Dorsolateral prefrontal cortex (tissue), 120 donors: ENCODE measurements at regions of chr2 and their contacts with region 1.

Region 1: GRCh38 chr2:57906152-57906732 is 140.4 kb upstream of the VRK2 start:
- DNase-seq: no peak
- H3K4me3 ChIP-seq: peak overlapping the region in 1 of 59 donors; percentile 6
- H3K27ac ChIP-seq: peak overlapping the region in 54 of 59 donors; percentile 20 to 96 (median 91)
- H3K27me3 ChIP-seq: no peaks in the 10 kb centered on the region
- CTCF ChIP-seq: peak; percentile 64 to 94 (median 83)

Region 2: DNA sequence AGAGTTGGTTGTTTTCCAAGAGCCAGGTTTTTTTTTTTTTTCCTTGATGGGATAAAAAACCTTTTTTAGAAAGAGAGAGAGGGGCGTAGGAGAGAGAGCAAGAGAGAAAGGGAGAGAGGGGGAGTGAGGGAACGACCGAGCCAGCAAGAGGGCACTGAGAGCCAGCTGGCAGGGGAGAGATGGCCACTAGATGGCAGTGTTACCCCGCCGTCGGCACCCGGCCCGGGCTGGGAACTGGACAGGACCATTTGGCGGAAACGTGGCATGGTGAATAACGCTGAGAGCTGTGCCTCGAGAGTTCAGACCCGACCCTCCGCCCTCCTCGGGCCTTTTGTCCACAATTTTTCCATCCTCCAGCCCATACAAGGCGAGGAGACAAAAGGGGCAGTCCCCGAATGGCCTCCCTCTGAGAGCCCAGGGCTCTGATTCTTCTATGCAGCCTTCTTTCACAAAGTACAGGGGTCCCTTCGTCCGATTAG is 146.4 kb before region 1 on chr2:
- intact Hi-C with region 1: loop called (anchors 10 kb)
- DNase-seq: peak; percentile 68 to 94 (median 90)
- H3K4me3 ChIP-seq: peak overlapping the region; percentile 17 to 76 (median 56)
- H3K27ac ChIP-seq: peak overlapping the region in 53 of 59 donors; percentile 12 to 91 (median 80)
- H3K27me3 ChIP-seq: no peaks in the 10 kb centered on the region
- CTCF ChIP-seq: peak; percentile 91 to 99 (median 96)

Region 3: DNA sequence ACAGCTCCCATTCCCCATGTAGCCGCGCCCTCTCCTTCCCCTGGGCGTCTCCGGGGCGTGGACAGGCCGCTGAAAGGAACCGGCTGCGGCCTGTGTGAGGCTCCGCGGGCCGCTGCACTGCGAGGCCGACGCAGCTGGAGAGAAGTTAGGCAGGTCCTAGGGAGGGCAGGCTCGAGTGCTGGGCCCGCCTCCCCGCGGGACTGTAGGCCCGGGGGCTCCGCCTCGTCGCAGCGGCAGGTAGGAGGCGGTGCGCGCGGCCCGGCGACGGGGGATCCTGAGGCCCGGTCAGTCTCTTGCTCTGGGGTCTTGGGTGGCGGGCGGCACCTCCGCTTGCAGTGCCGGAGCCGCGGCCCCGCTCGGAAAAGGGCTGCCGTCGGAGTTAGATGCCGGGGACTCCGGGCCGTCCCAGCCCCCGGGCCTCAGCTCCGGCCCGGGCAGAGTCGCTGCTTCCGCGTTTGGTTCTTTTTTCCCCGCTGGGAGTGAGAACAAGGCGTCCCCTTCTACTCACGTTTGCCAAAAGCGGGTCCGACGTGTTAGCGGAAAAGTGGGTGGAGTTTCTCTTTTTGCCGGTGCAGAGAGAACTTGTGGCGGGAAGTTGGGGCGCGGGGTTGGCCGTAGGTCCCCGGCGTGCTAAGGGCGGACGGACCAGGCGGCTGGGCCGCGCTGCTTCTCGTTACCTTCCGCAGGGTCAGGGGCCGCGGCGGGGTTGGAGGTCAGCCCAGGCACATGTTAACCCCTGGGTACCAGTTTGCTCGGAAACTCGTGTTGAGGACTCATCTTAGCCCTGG is 140.5 kb after region 1 on chr2 and contains the start of gene VRK2:
- intact Hi-C with region 1: loop called (anchors 5 to 10 kb)
- DNase-seq: peak in 9 of 10 donors; percentile 35 to 71 (median 46)
- H3K4me3 ChIP-seq: peak within 1 kb of the TSS; percentile 33 to 82 (median 72)
- H3K27ac ChIP-seq: peak within 1 kb of the TSS; percentile 50 to 96 (median 87)
- H3K27me3 ChIP-seq: peaks cover 0 to 12% (median 0%) of the 10 kb centered on the region in 45 donors
- CTCF ChIP-seq: peak in 25 of 56 donors; percentile 1 to 50 (median 22)
- total RNA-seq, gene VRK2: 4.8 to 70.5 (median 16.2) TPM

Region 4: DNA sequence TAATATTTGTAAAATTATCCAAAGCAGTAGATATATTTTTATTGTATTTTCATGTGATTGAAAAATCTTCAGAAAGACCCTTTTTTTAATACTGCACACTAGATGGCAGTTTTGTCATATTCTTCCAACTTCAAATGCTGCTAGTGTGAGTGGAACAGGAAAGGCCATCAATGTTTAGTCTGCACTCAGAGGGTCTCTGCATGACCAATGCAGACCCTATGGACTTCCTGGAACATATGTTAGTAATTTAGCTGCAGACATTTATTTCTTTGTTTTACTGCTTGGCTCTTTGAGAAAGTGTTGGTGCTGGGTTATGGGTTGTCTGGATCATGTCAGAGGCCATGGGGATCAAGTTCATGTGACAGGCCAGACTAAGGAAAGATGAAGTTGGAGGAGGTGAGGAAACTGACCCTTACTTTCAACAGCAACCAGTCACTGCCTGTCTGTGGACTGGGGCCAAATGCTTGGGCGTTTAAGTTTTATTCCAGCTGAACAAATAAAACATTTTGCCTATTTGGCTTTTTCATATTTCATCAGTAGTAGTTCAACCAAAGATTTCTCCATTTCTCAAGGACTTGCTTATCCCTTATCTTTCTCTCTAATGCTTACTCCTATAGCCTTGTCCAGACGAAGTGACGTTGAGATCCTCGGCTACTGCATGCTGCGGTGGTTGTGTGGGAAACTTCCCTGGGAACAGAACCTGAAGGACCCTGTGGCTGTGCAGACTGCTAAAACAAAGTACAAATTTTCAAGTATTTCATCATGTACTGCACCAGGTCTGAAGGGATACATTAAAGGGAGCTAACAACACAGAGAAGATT is 225.2 kb after region 1 on chr2:
- intact Hi-C with region 1: loop called (anchors 5 kb)
- DNase-seq: no peak
- H3K4me3 ChIP-seq: no peak overlapping the region
- H3K27ac ChIP-seq: peak overlapping the region in 52 of 59 donors; percentile 5 to 78 (median 57)
- H3K27me3 ChIP-seq: no peaks in the 10 kb centered on the region
- CTCF ChIP-seq: peak in 54 of 56 donors; percentile 30 to 81 (median 60)

Region 5: GRCh38 chr2:58427572-58428095 is 521.4 kb after region 1 on chr2:
- intact Hi-C with region 1: loop called (anchors 5 kb)
- DNase-seq: peak; percentile 9 to 81 (median 76)
- H3K4me3 ChIP-seq: peak overlapping the region; percentile 30 to 82 (median 66)
- H3K27ac ChIP-seq: peak overlapping the region; percentile 2 to 99 (median 95)
- H3K27me3 ChIP-seq: peaks cover 0 to 4% (median 0%) of the 10 kb centered on the region in 45 donors
- CTCF ChIP-seq: peak in 6 of 56 donors; percentile 15 to 33 (median 20)